Activated naive CD8-positive, alpha-beta T cell treated with anti-CD3 and anti-CD28 coated beads, Interleukin-2, amount 10 ng/mL, durations not matched to agents 7 days and 5 days (primary cell): ENCODE measurements at regions of chr21 and their contacts with region 1.

Region 1: DNA sequence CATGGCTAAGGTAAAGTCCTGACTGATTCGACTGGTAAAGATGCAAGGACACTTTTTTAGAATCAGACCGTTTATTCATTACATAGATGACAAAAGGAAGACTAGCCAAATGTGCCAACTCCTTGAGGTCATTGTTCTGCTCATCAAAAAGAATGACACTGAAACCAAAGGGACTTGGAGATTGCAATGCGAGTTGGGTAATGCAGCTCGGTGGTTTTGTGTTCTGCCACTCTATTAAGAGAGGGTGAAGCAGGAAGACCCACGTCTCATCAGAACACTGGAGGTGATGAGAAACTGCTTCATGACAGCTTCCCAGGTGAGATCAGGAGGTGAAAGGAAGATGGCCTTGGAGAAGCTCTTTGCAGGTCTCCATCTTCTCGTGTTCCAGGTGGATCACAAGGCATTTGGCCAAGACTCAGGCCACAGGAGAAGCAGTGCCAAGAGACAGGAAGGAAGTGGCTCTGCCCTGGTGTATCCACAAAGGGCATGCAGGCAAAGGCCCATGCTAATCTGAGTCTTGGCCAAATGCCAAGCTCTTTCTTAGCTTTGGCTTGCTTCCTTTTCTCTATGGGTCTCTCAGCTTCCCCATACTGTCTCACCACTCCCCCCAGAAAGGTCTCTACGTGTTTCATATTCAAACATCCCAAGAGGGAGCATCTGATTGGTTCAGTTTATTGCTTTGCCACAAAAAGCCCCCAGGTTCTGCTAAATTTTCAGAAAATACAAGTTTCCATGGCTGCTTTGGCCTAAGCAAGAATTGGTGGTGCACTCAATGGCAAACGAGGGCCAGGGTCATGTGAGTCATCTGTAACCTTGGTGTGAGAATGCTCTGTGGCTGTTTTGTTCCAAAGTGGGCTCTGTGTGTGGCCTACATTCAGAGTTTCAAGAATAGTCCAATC is 5.7 kb upstream of the CCT8 start:
- DNase-seq: peak; percentile 46
- ATAC-seq: peak; percentile 27
- H3K4me3 Mint-ChIP-seq: peak overlapping the region; percentile 93
- H3K27ac Mint-ChIP-seq: peak overlapping the region; percentile 90
- H3K4me1 Mint-ChIP-seq: peaks cover 44% of the 10 kb centered on the region
- H3K27me3 Mint-ChIP-seq: no peaks in the 10 kb centered on the region

Region 2: DNA sequence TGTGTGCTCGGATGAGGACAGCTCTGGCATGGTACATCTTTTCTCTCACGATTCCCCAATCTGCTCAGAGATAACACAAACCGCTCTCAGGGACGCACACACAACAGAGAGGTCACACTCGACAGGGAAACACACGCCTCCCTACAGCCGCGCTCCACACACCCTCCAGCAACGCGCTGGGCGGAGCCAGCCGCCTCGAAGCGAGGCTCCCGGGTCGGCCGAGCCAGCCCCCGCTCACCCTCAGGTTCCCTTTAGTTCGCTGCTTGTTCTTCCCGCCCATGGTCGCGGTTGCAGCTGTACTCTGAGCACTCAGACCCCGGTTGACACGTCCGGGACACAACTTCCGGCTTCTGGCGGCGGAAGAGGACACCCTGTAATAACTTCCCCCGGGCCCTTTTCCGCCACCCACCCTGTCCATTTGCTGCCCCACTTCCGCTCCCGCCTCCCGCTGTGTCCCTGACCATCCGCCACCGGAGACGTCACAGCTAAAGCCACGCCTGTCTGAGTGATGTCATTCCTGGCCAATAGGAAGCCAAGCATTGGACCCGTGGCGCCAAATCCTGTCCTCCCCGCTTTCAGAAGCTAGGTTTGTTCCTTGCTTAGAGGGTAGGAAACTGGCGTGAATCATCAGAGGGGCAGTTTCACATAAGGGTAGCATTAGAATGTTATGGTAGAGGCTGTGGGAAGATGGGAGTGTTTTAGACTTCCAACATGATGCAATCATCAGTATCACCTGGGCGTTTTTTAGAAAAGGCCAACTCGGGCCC is 86.4 kb before region 1 on chr21 and contains the start of gene LTN1:
- POLR2A ChIA-PET with region 1: interaction called, 19 read pairs
- DNase-seq: peak; percentile 96
- ATAC-seq: peak; percentile 95
- H3K4me3 Mint-ChIP-seq: peak within 1 kb of the TSS; percentile 96
- H3K27ac Mint-ChIP-seq: peak within 1 kb of the TSS; percentile 95
- H3K4me1 Mint-ChIP-seq: peaks cover 27% of the 10 kb centered on the region
- H3K27me3 Mint-ChIP-seq: no peaks in the 10 kb centered on the region
- total RNA-seq, gene LTN1: 27.4 to 29.3 TPM

Region 3: DNA sequence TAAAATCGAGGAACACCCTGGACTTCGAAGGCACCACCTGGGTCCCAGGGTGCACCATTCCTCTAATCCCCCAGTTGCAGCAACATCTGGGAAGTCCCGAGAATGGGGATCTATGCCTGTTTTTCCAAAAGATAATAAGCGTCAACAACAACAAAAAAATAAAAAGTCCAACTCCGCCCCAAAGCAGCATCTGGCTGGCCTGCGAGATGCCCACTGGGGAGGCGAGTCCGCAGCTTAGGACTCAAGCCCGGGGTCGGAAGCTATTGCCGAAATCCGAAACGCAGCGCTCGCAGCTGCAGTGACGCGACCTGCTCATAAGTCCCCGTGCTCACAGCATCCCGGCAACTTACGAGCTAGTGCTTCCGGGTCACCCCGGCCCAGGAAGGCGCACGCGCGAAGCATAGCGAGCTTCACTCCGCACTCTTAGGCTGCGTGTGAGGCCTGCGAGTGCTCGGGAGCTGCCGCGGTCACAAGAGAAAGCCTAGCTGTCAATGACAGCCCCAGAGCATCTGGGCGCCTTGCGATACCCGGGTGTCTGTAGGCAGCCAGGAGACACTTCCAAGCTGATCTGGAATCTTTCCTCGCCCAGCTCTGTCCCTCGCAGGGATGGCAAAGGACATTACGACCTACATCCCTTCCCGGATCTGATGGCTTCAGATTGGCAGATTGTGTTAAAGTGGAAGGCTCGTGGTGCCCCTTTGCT is 76.5 kb before region 1 on chr21:
- POLR2A ChIA-PET with region 1: interaction called, 11 read pairs
- DNase-seq: peak; percentile 91
- ATAC-seq: peak; percentile 100
- H3K4me3 Mint-ChIP-seq: peak overlapping the region; percentile 86
- H3K27ac Mint-ChIP-seq: peak overlapping the region; percentile 95
- H3K4me1 Mint-ChIP-seq: peaks cover 7% of the 10 kb centered on the region
- H3K27me3 Mint-ChIP-seq: no peaks in the 10 kb centered on the region

Region 4: DNA sequence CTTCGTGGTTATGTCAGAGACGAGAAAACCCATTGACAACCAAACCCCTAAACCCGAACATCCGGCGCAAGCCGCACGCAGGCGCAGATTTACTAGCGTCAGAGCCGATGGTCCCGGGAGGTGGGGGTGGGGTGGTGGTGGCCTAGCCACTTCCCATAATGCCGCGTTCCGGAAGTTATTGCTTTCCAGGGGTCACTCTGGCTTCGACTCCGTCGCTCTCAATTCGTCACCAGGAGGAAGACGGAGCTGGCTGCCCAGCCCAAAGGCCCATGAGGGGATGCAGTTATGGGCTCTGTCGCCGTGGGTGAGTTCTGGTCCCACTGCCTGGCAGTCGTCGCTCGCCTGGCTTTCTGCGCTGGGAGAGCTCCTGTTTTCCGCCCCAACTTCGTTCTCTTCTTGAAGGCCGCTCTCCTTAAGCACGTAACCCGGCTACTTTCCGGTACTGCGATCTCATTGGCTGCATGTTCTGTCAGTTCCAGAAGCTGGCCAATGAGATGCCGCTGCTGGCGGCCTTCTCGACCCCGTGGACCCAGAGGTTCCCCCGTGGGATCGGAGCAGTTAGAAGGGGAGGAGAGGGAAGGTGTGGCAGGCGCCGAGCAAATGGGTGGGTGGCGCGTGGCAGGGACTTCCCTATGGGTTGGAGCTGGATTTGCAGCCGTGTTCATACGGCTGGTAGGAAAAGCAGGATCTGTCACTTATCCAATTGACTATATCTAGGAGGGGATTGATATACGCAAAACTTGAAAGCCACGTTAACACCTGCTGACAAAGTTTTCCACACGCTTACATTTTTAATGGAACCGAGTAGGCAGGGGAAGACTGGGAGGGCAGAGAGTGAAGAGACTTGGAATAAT is 54.4 kb before region 1 on chr21 and contains the start of gene USP16:
- POLR2A ChIA-PET with region 1: interaction called, 33 read pairs
- DNase-seq: peak; percentile 93
- ATAC-seq: peak; percentile 96
- H3K4me3 Mint-ChIP-seq: peak within 1 kb of the TSS; percentile 93
- H3K27ac Mint-ChIP-seq: peak within 1 kb of the TSS; percentile 98
- H3K4me1 Mint-ChIP-seq: peaks cover 42% of the 10 kb centered on the region
- H3K27me3 Mint-ChIP-seq: no peaks in the 10 kb centered on the region
- total RNA-seq, gene USP16: 39.5 to 40.9 TPM

Region 5: GRCh38 chr21:29298348-29299045 is 219.4 kb after region 1 on chr21 and contains the start of gene BACH1:
- POLR2A ChIA-PET with region 1: interaction called, 18 read pairs
- DNase-seq: peak; percentile 92
- ATAC-seq: peak; percentile 84
- H3K4me3 Mint-ChIP-seq: peak within 1 kb of the TSS; percentile 89
- H3K27ac Mint-ChIP-seq: peak within 1 kb of the TSS; percentile 77
- H3K4me1 Mint-ChIP-seq: peaks cover 38% of the 10 kb centered on the region
- H3K27me3 Mint-ChIP-seq: no peaks in the 10 kb centered on the region
- total RNA-seq, gene BACH1: 33.2 to 35.0 TPM